ENCODE measurements at regions of chr5 and their contacts with region 1.

Region 1: GRCh38 chr5:149455889-149456409 is 76.9 kb upstream of the IL17B start:
- DNase-seq: peak; percentile 81 to 91
- H3K4me3 ChIP-seq: peak overlapping the region; percentile 17; the same call in 1 of the 2 replicates
- H3K27ac ChIP-seq: peak overlapping the region; percentile 54
- H3K4me1 ChIP-seq: peaks cover 23% of the 10 kb centered on the region
- H3K27me3 ChIP-seq: no peaks in the 10 kb centered on the region
- CTCF ChIP-seq: no peak

Region 2: DNA sequence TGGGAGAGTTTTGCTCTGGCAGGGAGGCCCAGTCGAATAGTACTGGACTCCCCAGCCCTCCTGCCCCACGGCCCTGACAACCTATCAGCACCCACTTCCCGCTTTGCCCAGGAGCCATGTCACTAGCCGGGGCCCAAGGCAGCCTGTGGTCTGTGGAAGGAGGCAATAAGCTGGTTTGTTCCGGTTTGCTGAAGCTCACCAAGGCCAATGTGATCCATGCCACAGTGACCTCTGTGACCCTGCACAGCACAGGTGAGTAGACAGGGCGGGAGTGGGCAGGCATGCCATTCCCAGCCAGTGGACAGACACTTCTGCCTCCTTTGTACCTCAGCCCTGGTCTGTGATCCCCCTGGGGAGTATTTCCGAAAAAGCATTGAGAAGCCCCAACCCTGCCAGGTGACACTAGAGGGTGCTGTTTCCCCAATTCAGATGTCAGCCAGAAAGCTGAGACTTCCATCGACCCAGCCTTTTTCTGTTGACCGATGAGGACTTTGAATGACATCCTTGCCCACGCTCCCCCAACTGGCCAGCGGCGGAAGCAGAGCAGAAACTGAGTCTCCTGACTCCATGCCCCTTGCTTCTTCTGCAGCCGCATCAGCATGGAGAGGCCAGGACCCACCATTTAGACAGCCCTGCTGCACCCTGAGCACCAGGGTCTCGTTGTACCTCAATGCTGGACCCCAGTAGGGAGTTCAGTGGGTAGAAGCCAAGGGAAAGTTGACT is 88.5 kb before region 1 on chr5:
- CTCF ChIA-PET with region 1: no interaction called
- POLR2A ChIA-PET with region 1: no interaction called
- intact Hi-C with region 1: no loop called
- DNase-seq: peak; percentile 64 to 76
- H3K4me3 ChIP-seq: no peak overlapping the region
- H3K27ac ChIP-seq: no peak overlapping the region
- H3K4me1 ChIP-seq: no peaks in the 10 kb centered on the region
- H3K27me3 ChIP-seq: no peaks in the 10 kb centered on the region
- CTCF ChIP-seq: peak; percentile 84

Region 3: DNA sequence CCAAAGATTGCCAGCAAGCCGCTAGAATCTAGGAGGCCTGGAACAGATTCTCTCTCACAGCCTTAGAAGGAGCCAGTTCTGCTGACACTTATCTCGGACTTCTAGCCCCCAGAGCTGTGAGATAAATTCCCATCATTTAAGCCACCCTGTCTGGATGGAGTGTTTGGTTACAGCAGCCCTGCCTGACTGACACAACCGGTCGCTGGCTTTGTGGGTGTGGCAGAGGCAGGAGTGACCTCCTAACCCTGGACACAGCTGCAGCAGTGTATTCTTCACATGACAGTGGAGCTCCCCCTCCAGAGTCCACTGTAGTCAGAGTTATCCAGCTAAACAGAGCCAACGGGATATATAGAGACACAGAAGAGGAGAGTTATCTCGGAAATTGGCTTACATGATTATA is 55.6 kb before region 1 on chr5:
- CTCF ChIA-PET with region 1: no interaction called
- POLR2A ChIA-PET with region 1: no interaction called
- intact Hi-C with region 1: no loop called
- DNase-seq: peak in 1 of 2 experiments; percentile 25
- H3K4me3 ChIP-seq: no peak overlapping the region
- H3K27ac ChIP-seq: no peak overlapping the region
- H3K4me1 ChIP-seq: peaks cover 11% of the 10 kb centered on the region
- H3K27me3 ChIP-seq: no peaks in the 10 kb centered on the region
- CTCF ChIP-seq: no peak

Region 4: GRCh38 chr5:149474212-149474618 is 18.3 kb after region 1 on chr5:
- CTCF ChIA-PET with region 1: no interaction called
- POLR2A ChIA-PET with region 1: interaction called, 4 read pairs
- intact Hi-C with region 1: loop called (anchors 2 kb)
- DNase-seq: peak; percentile 82 to 84
- H3K4me3 ChIP-seq: no peak overlapping the region
- H3K27ac ChIP-seq: no peak overlapping the region
- H3K4me1 ChIP-seq: peaks cover 22% of the 10 kb centered on the region
- H3K27me3 ChIP-seq: no peaks in the 10 kb centered on the region
- CTCF ChIP-seq: no peak

Region 5: DNA sequence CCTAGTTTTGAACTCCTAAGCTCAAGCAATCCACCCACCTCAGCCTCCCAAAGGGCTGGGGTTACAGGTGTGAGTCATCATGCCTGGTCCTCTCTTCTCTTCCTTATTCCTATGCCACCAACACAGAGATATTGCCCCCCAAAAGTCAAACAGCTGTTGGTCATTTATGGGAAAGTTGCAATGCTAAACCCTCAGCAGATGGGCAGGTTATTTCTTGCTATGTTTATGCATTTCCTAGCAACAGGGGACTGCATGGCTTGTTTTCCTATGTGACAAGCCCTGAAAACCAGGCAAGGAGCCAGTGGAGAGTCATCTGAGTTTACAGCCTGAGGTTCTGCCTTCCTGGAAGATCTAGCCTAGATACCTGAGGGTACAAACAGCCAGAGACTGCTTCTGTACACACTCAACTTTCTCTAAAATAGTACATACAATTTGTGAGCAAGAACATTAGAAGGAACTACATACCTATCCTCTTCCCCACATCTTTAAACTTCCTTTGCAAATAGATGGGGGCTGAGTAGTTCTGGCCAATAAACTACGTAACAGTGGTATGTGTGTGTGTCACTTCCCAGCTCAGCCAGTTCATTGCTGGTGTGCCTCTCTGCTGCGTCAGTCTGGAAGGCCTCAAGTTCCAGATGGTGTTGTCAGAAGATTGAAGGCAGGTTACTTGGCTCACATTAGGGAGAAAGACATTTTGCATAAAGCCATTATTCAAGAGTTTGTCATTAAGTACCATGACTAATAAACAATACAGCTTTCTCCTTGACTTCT is 29.9 kb after region 1 on chr5:
- CTCF ChIA-PET with region 1: no interaction called
- POLR2A ChIA-PET with region 1: interaction called, 3 read pairs
- intact Hi-C with region 1: loop called (anchors 2 kb)
- DNase-seq: peak; percentile 89 to 99
- H3K4me3 ChIP-seq: no peak overlapping the region
- H3K27ac ChIP-seq: peak overlapping the region; percentile 92
- H3K4me1 ChIP-seq: peaks cover 88% of the 10 kb centered on the region
- H3K27me3 ChIP-seq: no peaks in the 10 kb centered on the region
- CTCF ChIP-seq: no peak

Region 6: GRCh38 chr5:149500922-149501582 is 45.1 kb after region 1 on chr5:
- CTCF ChIA-PET with region 1: no interaction called
- POLR2A ChIA-PET with region 1: no interaction called
- intact Hi-C with region 1: no loop called
- DNase-seq: no peak
- H3K4me3 ChIP-seq: no peak overlapping the region
- H3K27ac ChIP-seq: no peak overlapping the region
- H3K4me1 ChIP-seq: 0 out of 2 replicates have a peak, but pooled peaks cover 4% of the 10 kb centered on the region
- H3K27me3 ChIP-seq: no peaks in the 10 kb centered on the region
- CTCF ChIP-seq: no peak